A549 (cell line): ENCODE measurements at regions of chr15 and their contacts with region 1.

Region 1: DNA sequence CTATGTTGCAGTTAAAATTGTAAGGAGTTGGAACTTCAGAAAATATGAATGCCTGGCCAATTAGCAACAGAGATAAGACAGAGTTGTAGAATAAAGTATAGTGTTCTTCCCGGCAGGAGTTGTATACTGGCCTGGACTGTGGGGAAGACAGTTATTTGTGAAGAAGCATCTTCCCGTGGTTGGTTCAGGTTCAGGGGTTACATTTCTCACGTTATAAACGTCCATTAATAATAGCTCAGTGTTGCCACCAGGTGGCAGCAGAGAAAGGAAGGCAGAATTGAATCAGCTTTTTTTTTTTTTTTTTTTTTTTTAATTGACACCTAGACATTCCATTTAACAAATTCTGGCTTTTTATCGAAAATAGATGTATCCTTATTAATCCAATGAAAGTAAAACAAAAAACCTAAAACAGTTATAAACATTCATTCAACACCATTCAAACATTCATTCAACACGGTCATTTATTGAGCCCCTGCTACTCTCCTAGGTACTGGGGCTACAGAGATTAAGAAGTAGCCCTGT is 66.4 kb upstream of the NR2E3 start:
- DNase-seq: peak in 1 of 2 experiments; percentile 73
- ATAC-seq: no peak
- H3K4me3 ChIP-seq: no peak overlapping the region
- H3K27ac ChIP-seq: peak overlapping the region; percentile 89 to 99
- H3K4me1 ChIP-seq: peaks cover 52% of the 10 kb centered on the region
- CTCF ChIP-seq: peak; percentile 96
- EP300 ChIP-seq: no peak
- POLR2A ChIP-seq: no peak
- RAD21 ChIP-seq: peak; percentile 78 to 80

Region 2: GRCh38 chr15:71448688-71449114 is 295.2 kb before region 1 on chr15:
- CTCF ChIA-PET with region 1: interaction called, 34 read pairs
- POLR2A ChIA-PET with region 1: no interaction called
- DNase-seq: peak; percentile 55 to 86
- ATAC-seq: peak; percentile 36 to 47; a peak in 3 of 6 replicates
- H3K4me3 ChIP-seq: no peak overlapping the region
- H3K27ac ChIP-seq: peak overlapping the region; percentile 85
- H3K4me1 ChIP-seq: peaks cover 67% of the 10 kb centered on the region
- CTCF ChIP-seq: peak; percentile 98
- EP300 ChIP-seq: no peak
- POLR2A ChIP-seq: no peak
- RAD21 ChIP-seq: peak; percentile 96 to 97

Region 3: DNA sequence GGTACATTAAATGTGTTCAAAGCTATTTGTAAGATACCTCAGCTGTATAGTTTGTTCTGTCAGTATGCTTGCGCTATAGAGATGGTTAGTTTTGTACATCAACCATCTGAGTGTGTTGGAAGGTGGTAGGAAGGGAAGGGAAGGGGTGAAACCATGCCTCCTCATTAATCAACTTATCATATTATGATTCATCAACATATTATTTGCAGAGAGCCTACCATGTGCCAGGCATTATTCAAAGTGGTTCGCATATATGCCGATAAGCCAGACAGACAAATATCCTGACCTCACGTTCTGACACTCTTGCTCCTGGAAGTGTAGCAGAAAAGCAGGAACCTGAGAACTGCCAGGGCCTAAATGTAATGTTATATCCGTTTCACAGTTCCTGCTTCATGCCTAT is 181.7 kb before region 1 on chr15:
- CTCF ChIA-PET with region 1: no interaction called
- POLR2A ChIA-PET with region 1: no interaction called
- DNase-seq: no peak
- ATAC-seq: no peak
- H3K4me3 ChIP-seq: no peak overlapping the region
- H3K27ac ChIP-seq: peak overlapping the region in 1 of 2 experiments; percentile 3; a peak in 1 of 6 replicates
- H3K4me1 ChIP-seq: peaks cover 12% of the 10 kb centered on the region; the same call in 2 of the 3 replicates
- CTCF ChIP-seq: no peak
- EP300 ChIP-seq: no peak
- POLR2A ChIP-seq: no peak
- RAD21 ChIP-seq: no peak

Region 4: DNA sequence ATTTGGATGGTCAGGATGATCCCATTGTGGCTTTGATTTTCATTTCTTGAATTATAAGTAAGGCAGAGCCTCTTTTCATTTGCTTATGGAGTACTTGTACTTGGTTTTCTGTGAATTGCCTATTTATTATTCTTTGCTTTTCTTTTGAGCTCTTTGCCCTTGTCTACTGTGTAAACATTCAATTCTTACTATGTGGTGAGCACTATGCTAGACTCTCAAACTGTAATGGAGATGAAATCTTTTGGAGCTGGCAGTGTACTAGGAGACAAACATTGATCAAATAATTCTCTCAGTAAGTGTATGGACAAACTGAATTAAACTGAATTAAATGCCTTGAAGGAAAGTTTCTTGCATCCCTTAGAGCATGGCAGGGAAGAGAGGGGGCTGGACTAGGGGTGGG is 20.6 kb before region 1 on chr15:
- CTCF ChIA-PET with region 1: interaction called, 23 read pairs
- POLR2A ChIA-PET with region 1: no interaction called
- DNase-seq: no peak
- ATAC-seq: no peak
- H3K4me3 ChIP-seq: no peak overlapping the region
- H3K27ac ChIP-seq: no peak overlapping the region
- H3K4me1 ChIP-seq: peaks cover 7% of the 10 kb centered on the region; the same call in 2 of the 3 replicates
- CTCF ChIP-seq: no peak
- EP300 ChIP-seq: no peak
- POLR2A ChIP-seq: no peak
- RAD21 ChIP-seq: no peak

Region 5: DNA sequence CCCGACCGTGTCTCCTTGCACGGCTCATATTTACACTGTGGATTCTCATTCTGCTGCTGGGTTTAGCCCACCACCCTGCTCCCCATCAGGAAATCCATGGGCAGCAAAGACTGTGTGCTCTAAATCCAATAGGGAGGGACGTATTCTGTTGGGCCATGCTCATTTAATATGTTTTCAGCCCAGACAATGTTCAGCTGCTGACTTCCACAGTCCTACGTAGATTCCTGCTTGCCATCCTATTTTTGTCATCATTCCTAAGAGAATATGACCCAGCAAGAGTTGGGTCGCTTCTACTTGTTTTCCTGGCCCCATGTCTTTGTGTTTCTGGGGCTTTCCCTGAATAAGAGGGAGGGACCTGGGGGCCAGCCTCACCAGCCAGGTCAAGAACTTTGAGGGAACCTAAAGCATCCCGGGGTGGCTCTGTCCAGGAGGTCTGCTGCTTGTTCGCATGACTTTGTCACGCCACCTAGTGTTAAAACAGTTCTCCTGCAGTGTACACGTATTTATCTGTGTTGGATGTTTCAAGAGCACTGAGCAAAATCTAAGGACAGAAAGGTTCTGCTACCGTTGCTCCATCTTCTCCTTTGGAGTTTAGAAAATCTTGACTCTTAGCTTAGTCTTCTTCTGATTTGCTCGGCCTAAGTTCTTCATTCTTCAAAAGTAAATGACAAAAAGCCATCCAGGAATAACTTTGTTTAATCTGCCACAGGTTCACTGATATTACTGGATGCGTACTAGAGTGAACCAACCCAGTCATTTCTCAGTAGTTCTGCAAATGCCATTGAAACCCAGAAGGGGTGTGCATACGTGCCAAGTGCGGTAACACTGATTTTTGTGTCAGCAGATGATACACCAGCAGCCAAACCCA is 13.4 kb before region 1 on chr15:
- CTCF ChIA-PET with region 1: interaction called, 27 read pairs
- POLR2A ChIA-PET with region 1: interaction called, 3 read pairs
- DNase-seq: peak; percentile 85 to 88
- ATAC-seq: peak; percentile 88 to 98
- H3K4me3 ChIP-seq: no peak overlapping the region
- H3K27ac ChIP-seq: no peak overlapping the region
- H3K4me1 ChIP-seq: peaks cover 4% of the 10 kb centered on the region; the same call in 2 of the 3 replicates
- CTCF ChIP-seq: peak; percentile 91
- EP300 ChIP-seq: no peak
- POLR2A ChIP-seq: no peak
- RAD21 ChIP-seq: peak; percentile 80 to 81

Region 6: DNA sequence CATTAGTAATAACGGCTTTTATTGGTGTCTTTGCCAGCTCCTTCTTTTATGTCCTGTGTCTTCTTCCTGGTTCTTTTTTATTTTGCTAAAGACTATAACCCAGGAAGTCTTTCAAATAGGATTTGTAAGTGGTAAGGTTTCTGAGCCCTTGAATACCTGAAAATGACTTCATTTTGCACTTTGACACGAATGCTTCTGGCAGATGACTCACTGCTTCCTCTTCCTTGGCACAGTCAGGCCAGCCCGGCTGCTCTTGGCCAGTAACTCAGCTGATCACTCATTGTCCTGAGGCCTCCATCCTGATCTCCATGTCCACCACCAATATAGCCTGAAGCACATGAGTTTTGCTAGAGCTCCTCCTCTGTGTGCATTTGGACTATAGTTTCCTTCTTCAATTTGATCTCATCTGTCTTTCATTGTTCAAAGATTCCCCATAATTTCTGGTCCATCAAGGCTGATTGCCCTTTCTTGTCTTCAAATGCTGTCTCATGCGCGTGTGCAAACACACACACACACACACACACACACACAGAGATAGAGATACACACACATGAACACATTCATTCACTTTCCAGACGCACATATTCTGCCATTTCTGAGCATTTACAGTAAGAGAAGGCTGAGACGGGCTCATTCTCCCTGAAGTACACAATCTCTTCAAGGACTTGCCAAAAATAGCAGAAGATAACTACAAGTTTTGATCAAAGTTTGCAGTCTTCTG is 17.9 kb after region 1 on chr15:
- CTCF ChIA-PET with region 1: interaction called, 14 read pairs
- POLR2A ChIA-PET with region 1: interaction called, 3 read pairs
- DNase-seq: peak; percentile 62 to 83
- ATAC-seq: peak; percentile 73 to 87
- H3K4me3 ChIP-seq: no peak overlapping the region
- H3K27ac ChIP-seq: peak overlapping the region; percentile 12 to 40; a peak in 5 of 6 replicates
- H3K4me1 ChIP-seq: peaks cover 9% of the 10 kb centered on the region
- CTCF ChIP-seq: 0 out of 3 replicates have a peak, but pooled peaks have one; percentile 3
- EP300 ChIP-seq: no peak
- POLR2A ChIP-seq: no peak
- RAD21 ChIP-seq: no peak

Region 7: GRCh38 chr15:71780115-71780976 is 36.4 kb after region 1 on chr15:
- CTCF ChIA-PET with region 1: interaction called, 175 read pairs
- POLR2A ChIA-PET with region 1: interaction called, 3 read pairs
- DNase-seq: peak; percentile 84 to 90
- ATAC-seq: peak; percentile 59 to 80
- H3K4me3 ChIP-seq: no peak overlapping the region
- H3K27ac ChIP-seq: peak overlapping the region; percentile 72 to 75
- H3K4me1 ChIP-seq: peaks cover 26% of the 10 kb centered on the region
- CTCF ChIP-seq: peak; percentile 93
- EP300 ChIP-seq: no peak
- POLR2A ChIP-seq: no peak
- RAD21 ChIP-seq: peak; percentile 67 to 77

Region 8: DNA sequence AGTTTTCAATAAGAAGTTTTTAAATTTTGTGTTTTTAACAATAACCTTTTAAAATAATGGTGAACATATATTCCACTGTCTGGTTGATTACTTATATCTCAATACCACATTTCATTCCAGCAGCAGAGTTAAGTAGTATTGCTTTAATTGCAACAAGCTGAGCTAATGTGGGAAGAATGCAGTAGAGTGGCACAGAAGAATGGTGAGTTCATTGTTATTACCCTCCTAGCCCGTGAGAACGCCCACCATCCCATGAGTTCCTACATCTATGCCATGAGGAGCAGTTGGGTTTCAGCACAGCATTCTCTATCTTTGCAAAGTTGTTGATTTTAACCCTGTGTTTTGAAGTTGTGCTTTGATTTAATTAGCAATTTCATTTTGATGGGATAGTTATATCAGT is 48.6 kb after region 1 on chr15:
- CTCF ChIA-PET with region 1: interaction called, 522 read pairs
- POLR2A ChIA-PET with region 1: interaction called, 3 read pairs
- DNase-seq: peak in 1 of 2 experiments; percentile 46
- ATAC-seq: no peak
- H3K4me3 ChIP-seq: no peak overlapping the region
- H3K27ac ChIP-seq: peak overlapping the region; percentile 64 to 83; a peak in 4 of 6 replicates
- H3K4me1 ChIP-seq: peaks cover 32% of the 10 kb centered on the region
- CTCF ChIP-seq: no peak
- EP300 ChIP-seq: no peak
- POLR2A ChIP-seq: no peak
- RAD21 ChIP-seq: no peak

Region 9: DNA sequence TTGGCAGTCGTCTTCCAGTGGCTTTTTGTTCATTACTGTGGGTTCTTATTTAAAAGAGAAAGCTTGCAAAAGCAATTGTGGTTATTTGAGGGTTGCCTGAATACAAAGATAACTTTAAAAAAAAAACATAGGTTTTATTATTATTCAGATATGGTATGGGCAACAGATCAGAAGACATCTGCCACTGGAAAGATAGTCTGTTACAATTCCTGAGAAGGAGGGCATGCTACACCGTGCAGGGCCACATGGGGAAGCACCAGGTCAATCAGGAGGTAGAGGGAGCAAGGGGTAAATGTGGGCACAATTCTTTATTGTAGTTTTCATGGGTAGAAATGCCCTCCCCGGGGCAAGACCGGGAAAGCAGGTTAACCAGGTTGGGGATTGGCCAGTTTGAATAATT is 988.6 kb after region 1 on chr15:
- CTCF ChIA-PET with region 1: no interaction called
- POLR2A ChIA-PET with region 1: no interaction called
- DNase-seq: no peak
- ATAC-seq: peak; percentile 63 to 76; a peak in 5 of 6 replicates
- H3K4me3 ChIP-seq: no peak overlapping the region
- H3K27ac ChIP-seq: no peak overlapping the region
- H3K4me1 ChIP-seq: no peaks in the 10 kb centered on the region
- CTCF ChIP-seq: no peak
- EP300 ChIP-seq: no peak
- POLR2A ChIP-seq: no peak
- RAD21 ChIP-seq: no peak